HAP-1 (cell line): ENCODE measurements at regions of chr2 and their contacts with region 1.

Region 1: GRCh38 chr2:240434728-240435456 is 571 bp upstream of the GPC1 start:
- DNase-seq: peak; percentile 82 to 97
- H3K4me3 ChIP-seq: peak overlapping the region; percentile 42
- H3K4me1 ChIP-seq: peaks cover 16% of the 10 kb centered on the region
- H3K27me3 ChIP-seq: no peaks in the 10 kb centered on the region

Region 2: GRCh38 chr2:240060977-240061591 is 373.8 kb before region 1 on chr2:
- in situ Hi-C with region 1: loop called (anchors 25 kb)
- DNase-seq: peak; percentile 45 to 61
- H3K4me3 ChIP-seq: no peak overlapping the region
- H3K4me1 ChIP-seq: peaks cover 10% of the 10 kb centered on the region
- H3K27me3 ChIP-seq: peaks cover 14% of the 10 kb centered on the region

Region 3: DNA sequence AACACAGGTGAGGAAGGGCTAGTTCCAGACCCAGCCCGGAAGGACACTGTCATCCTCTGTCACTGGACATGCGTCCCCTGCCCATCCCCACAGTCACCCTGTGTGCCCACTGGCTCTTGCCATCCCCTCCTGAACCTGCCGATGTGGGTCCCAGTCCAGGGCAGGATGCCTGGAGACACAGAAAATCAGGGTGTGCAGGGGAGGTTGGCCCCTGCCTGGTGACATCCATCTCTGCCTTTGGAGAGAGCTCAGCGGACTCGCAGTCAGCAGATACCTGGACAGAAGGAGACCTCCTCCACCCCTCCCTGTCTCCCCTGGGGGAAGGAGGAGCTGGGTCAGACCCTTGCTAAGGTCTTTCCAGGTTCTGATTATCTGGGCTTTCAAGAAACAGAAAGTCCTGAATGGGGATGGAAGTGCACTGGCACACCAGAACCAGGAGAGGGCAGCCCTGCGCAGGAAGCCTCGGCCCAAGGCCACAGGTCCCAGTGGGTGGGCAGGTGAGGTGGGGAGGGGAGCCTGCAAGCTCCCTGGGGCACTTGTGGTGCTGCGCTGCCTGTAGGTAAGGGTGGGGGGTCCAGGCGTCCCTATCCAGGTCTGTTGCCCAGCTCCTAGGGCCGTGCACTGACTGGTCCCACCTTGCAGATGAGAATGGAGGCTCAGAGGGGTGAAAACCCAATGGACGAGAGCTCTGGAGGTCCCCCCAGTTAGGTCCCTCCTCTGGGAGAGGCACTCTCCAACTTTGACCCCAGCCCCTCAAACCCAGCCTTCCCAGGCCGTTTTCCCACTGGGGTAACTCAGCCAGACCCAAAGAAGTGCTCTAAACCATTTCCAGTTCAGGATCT is 284.7 kb before region 1 on chr2:
- in situ Hi-C with region 1: loop called (anchors 5 kb)
- DNase-seq: peak; percentile 7 to 69
- H3K4me3 ChIP-seq: no peak overlapping the region
- H3K4me1 ChIP-seq: no peaks in the 10 kb centered on the region
- H3K27me3 ChIP-seq: no peaks in the 10 kb centered on the region

Region 4: GRCh38 chr2:240232961-240233893 is 201.7 kb before region 1 on chr2:
- in situ Hi-C with region 1: loop called (anchors 5 kb)
- DNase-seq: peak; percentile 74 to 97
- H3K4me3 ChIP-seq: peak overlapping the region; percentile 37
- H3K4me1 ChIP-seq: no peaks in the 10 kb centered on the region
- H3K27me3 ChIP-seq: no peaks in the 10 kb centered on the region